ENCODE measurements at regions of chr3 and their contacts with region 1.

Region 1: GRCh38 chr3:70201975-70202374 is 110.5 kb downstream of the MDFIC2 start:
- DNase-seq: no peak
- ATAC-seq: no peak
- H3K4me3 ChIP-seq: no peak overlapping the region
- H3K4me3 Mint-ChIP-seq: no peak overlapping the region
- H3K27ac ChIP-seq: no peak overlapping the region
- H3K27ac Mint-ChIP-seq: no peak overlapping the region
- H3K4me1 ChIP-seq: no peaks in the 10 kb centered on the region
- H3K4me1 Mint-ChIP-seq: no peaks in the 10 kb centered on the region
- H3K27me3 ChIP-seq: no peaks in the 10 kb centered on the region
- H3K27me3 Mint-ChIP-seq: no peaks in the 10 kb centered on the region
- CTCF ChIP-seq: no peak

Region 2: GRCh38 chr3:70531063-70531657 is 329.2 kb after region 1 on chr3:
- intact Hi-C with region 1: no loop called
- DNase-seq: peak in 1 of 2 donors; percentile 31
- ATAC-seq: no peak
- H3K4me3 ChIP-seq: no peak overlapping the region
- H3K4me3 Mint-ChIP-seq: no peak overlapping the region
- H3K27ac ChIP-seq: no peak overlapping the region
- H3K27ac Mint-ChIP-seq: no peak overlapping the region
- H3K4me1 ChIP-seq: no peaks in the 10 kb centered on the region
- H3K4me1 Mint-ChIP-seq: no peaks in the 10 kb centered on the region
- H3K27me3 ChIP-seq: no peaks in the 10 kb centered on the region
- H3K27me3 Mint-ChIP-seq: peaks cover 4 to 16% of the 10 kb centered on the region in 2 donors
- CTCF ChIP-seq: peak; percentile 31

Region 3: DNA sequence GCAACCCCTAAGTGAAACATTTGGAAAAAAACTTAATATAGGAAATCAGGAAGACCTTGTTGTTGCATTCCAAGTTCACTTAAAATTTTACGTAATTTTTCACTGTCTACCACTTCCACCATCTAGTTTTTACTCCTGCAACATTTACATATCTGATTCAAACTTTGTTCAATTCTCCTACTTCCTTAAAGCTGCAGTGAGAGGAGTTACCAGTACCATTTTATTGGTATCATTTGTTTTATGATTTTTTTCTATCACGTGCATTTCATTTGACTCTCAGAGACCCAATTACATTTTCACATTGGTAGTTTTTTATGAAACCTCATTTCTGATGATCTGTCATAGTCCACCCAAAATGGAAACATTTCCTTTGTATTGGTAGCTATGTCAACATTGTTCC is 395.3 kb after region 1 on chr3:
- intact Hi-C with region 1: loop called (anchors 5 kb)
- DNase-seq: no peak
- ATAC-seq: no peak
- H3K4me3 ChIP-seq: no peak overlapping the region
- H3K4me3 Mint-ChIP-seq: no peak overlapping the region
- H3K27ac ChIP-seq: no peak overlapping the region
- H3K27ac Mint-ChIP-seq: no peak overlapping the region
- H3K4me1 ChIP-seq: no peaks in the 10 kb centered on the region
- H3K4me1 Mint-ChIP-seq: no peaks in the 10 kb centered on the region
- H3K27me3 ChIP-seq: peaks cover 4% of the 10 kb centered on the region
- H3K27me3 Mint-ChIP-seq: peaks cover 4 to 8% of the 10 kb centered on the region in 2 donors
- CTCF ChIP-seq: no peak

Measured in natural killer cell (primary cell).